ENCODE measurements at regions of chr17 and their contacts with region 1.

Region 1: GRCh38 chr17:32486111-32486700 is 587 bp upstream of the CDK5R1 start:
- DNase-seq: peak in 8 of 9 experiments; percentile 45 to 89 (median 66)
- ATAC-seq: peak; percentile 78
- H3K4me3 ChIP-seq: no peak overlapping the region
- H3K4me3 Mint-ChIP-seq: peak overlapping the region; percentile 76
- H3K27ac ChIP-seq: no peak overlapping the region
- H3K27ac Mint-ChIP-seq: peak overlapping the region; percentile 39
- H3K4me1 ChIP-seq: peaks cover 44% of the 10 kb centered on the region
- H3K4me1 Mint-ChIP-seq: peaks cover 41% of the 10 kb centered on the region
- H3K27me3 ChIP-seq: no peaks in the 10 kb centered on the region
- H3K27me3 Mint-ChIP-seq: no peaks in the 10 kb centered on the region
- CTCF ChIP-seq: no peak

Region 2: DNA sequence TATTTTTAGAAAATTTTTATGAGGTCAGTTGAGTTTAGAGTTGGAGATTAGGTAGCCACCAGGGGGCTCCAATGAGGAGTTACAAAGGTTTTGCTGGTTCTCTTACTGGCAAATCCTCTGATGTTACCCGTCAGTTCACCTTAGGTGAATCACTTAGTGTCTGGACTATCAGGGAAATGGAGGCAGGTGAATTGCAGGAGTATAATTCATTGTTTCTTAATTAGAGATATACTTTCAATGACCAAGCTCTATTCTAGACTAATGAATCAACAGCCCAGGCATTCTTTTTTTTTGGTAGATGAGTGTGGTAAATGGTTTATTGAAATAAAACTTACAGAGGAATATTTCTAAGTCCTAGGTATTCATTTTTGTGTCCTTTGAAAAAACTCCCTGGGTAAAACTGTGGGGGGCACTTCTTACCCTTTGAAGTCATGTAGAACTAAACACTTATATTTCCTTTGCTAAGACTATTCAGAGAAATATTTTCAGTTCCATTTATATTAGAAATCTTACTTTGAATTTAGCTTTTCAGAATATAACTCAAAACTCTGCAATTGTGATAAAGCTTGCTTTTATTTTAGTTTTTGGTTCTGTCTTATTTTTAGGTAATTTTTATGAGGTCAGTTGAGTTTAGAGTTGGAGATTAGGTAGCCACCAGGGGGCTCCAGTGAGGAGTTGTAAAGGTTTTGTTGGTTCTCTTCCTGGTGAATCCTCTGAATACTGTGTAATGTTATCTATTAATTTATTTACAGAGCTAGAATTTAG is 24.2 kb before region 1 on chr17:
- CTCF ChIA-PET with region 1: interaction called, 120 read pairs
- POLR2A ChIA-PET with region 1: interaction called, 7 read pairs
- intact Hi-C with region 1: loop called in 1 of 2 experiments (anchors 2 kb)
- DNase-seq: peak; percentile 40 to 81 (median 67)
- ATAC-seq: peak; percentile 91
- H3K4me3 ChIP-seq: no peak overlapping the region
- H3K4me3 Mint-ChIP-seq: no peak overlapping the region
- H3K27ac ChIP-seq: no peak overlapping the region
- H3K27ac Mint-ChIP-seq: peak overlapping the region; percentile 38
- H3K4me1 ChIP-seq: peaks cover 4% of the 10 kb centered on the region
- H3K4me1 Mint-ChIP-seq: peaks cover 23% of the 10 kb centered on the region
- H3K27me3 ChIP-seq: no peaks in the 10 kb centered on the region
- H3K27me3 Mint-ChIP-seq: no peaks in the 10 kb centered on the region
- CTCF ChIP-seq: peak; percentile 56

Region 3: GRCh38 chr17:32503251-32504165 is 17.3 kb after region 1 on chr17:
- CTCF ChIA-PET with region 1: interaction called, 15 read pairs
- POLR2A ChIA-PET with region 1: interaction called, 15 read pairs
- intact Hi-C with region 1: loop called in 1 of 2 experiments (anchors 2 kb)
- DNase-seq: peak in 7 of 9 experiments; percentile 36 to 85 (median 61)
- ATAC-seq: peak; percentile 91
- H3K4me3 ChIP-seq: peak overlapping the region in 1 of 2 experiments; percentile 39
- H3K4me3 Mint-ChIP-seq: peak overlapping the region; percentile 68
- H3K27ac ChIP-seq: peak overlapping the region; percentile 60 to 90
- H3K27ac Mint-ChIP-seq: peak overlapping the region; percentile 98
- H3K4me1 ChIP-seq: peaks cover 76% of the 10 kb centered on the region
- H3K4me1 Mint-ChIP-seq: peaks cover 79% of the 10 kb centered on the region
- H3K27me3 ChIP-seq: no peaks in the 10 kb centered on the region
- H3K27me3 Mint-ChIP-seq: no peaks in the 10 kb centered on the region
- CTCF ChIP-seq: no peak

Region 4: GRCh38 chr17:32575880-32576279 is 89.7 kb after region 1 on chr17:
- CTCF ChIA-PET with region 1: no interaction called
- POLR2A ChIA-PET with region 1: interaction called, 12 read pairs
- intact Hi-C with region 1: no loop called
- DNase-seq: peak in 2 of 9 experiments; percentile 21 to 41
- ATAC-seq: no peak
- H3K4me3 ChIP-seq: no peak overlapping the region
- H3K4me3 Mint-ChIP-seq: no peak overlapping the region
- H3K27ac ChIP-seq: no peak overlapping the region
- H3K27ac Mint-ChIP-seq: no peak overlapping the region
- H3K4me1 ChIP-seq: peaks cover 8% of the 10 kb centered on the region
- H3K4me1 Mint-ChIP-seq: peaks cover 12% of the 10 kb centered on the region
- H3K27me3 ChIP-seq: no peaks in the 10 kb centered on the region
- H3K27me3 Mint-ChIP-seq: no peaks in the 10 kb centered on the region
- CTCF ChIP-seq: no peak

Region 5: DNA sequence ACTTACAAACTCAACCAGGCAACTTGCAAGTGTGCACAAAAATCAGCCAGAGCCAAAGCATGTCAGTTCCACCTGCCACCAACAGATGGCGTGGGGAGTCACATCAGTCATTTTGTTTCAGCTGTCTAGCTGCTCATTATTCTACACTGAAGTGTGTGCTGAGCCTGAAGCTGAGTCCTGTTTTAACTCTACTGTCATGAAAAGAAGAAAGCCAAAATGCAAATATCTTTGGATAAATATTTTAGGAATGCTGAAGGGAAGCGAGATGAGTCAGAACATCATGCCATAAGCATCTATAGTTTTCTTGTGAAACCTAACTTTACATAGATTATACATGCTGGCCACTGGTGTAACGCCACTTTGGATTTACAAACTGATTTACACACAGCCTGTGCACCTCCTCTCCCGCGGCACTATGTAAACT is 173.2 kb after region 1 on chr17:
- CTCF ChIA-PET with region 1: interaction called, 14 read pairs
- POLR2A ChIA-PET with region 1: no interaction called
- intact Hi-C with region 1: no loop called
- DNase-seq: peak; percentile 41 to 73 (median 63)
- ATAC-seq: peak; percentile 65
- H3K4me3 ChIP-seq: no peak overlapping the region
- H3K4me3 Mint-ChIP-seq: no peak overlapping the region
- H3K27ac ChIP-seq: no peak overlapping the region
- H3K27ac Mint-ChIP-seq: no peak overlapping the region
- H3K4me1 ChIP-seq: no peaks in the 10 kb centered on the region
- H3K4me1 Mint-ChIP-seq: no peaks in the 10 kb centered on the region
- H3K27me3 ChIP-seq: no peaks in the 10 kb centered on the region
- H3K27me3 Mint-ChIP-seq: no peaks in the 10 kb centered on the region
- CTCF ChIP-seq: peak; percentile 91